ENCODE measurements at regions of chr22 and their contacts with region 1.

Region 1: DNA sequence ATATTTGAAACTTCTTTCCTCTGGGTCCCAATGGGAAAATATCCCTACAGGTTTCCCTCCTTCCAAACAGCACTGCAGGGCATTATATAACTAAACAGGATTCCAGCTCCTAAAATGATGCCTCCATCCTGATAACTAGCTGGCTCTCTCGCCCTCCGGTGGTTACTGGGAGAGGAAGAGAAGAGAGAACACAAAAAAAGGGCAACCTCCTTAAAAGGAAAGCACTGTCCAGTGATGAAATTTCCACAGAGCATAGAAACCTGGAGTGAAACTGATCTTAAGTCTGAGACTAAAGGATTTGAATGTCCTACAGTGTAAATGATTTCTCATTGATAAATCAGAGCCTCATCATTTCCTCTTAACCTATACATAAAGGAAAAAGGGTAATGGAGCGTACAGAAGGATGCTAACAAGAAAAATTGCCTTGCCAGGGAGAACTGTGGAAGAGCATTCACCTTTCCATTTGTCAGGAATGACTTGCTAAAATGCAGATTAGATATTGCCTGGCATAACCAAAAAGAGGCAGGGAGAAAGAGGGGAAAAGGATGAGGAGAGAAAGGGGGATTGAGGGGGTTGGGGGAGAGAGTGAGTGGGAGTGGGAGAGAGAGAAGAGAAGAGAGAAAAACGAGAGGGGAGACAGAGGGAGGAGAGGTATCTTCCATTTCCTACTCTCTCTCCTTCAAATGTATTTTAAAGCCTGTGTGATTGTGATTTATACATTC is 121.3 kb downstream of the APOL5 start:
- DNase-seq: peak; percentile 54
- H3K4me3 ChIP-seq: peak overlapping the region; percentile 58
- CTCF ChIP-seq: peak; percentile 60

Region 2: GRCh38 chr22:35792506-35792905 is 46.5 kb before region 1 on chr22:
- in situ Hi-C with region 1: loop called (anchors 5 kb)
- DNase-seq: no peak
- H3K4me3 ChIP-seq: no peak overlapping the region
- CTCF ChIP-seq: no peak

Measured in astrocyte of the cerebellum (primary cell).